ENCODE measurements at regions of chr3 and their contacts with region 1.

Region 1: DNA sequence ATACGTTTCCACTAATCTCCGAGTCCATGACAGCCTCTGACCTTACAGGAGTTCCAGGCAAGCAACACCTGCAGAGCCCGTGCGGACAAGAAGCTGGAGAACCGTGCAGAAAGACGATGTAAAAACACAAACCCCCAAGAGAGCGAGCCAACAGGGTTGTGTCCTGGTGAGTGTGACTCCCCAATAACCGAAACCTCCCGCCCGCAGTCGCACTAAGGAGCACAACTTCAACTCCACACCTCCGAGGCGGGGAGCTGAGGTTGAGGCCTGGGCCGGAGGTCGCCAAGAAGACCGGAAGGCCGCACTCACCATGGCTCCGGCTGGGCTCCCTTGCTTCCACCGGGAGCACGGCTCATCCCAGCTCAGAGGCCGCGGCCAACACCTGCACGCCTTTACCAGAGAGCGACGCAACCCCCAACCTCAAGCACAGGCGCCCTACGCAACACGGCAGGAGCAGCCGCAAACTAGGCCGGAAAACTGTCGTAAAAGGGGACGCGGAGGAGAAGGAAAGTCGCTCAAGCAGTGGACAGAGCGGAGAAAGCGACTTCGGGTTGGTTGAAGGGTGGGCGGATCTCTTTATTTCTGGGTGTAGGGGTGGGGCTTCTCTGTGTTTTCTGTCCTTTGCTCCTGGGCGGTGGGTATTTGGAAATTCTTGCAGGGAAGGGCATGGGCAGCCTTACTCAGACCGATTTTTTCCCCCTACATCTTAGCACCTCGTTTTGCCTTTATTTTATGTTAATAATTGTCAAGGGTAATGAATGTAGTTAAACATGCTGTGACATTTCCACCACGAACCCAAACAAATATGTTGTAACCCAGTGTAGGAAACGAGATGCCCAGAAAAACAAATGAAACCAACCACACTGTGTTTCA is at the start of gene DNAJC19:
- DNase-seq: peak; percentile 94
- ATAC-seq: peak; percentile 96
- H3K4me3 Mint-ChIP-seq: peak within 1 kb of the TSS; percentile 82
- H3K27ac Mint-ChIP-seq: peak within 1 kb of the TSS; percentile 96
- H3K4me1 Mint-ChIP-seq: peaks cover 26% of the 10 kb centered on the region
- H3K27me3 Mint-ChIP-seq: no peaks in the 10 kb centered on the region
- CTCF ChIP-seq: no peak
- total RNA-seq, gene DNAJC19: 67.6 to 69.3 TPM

Region 2: DNA sequence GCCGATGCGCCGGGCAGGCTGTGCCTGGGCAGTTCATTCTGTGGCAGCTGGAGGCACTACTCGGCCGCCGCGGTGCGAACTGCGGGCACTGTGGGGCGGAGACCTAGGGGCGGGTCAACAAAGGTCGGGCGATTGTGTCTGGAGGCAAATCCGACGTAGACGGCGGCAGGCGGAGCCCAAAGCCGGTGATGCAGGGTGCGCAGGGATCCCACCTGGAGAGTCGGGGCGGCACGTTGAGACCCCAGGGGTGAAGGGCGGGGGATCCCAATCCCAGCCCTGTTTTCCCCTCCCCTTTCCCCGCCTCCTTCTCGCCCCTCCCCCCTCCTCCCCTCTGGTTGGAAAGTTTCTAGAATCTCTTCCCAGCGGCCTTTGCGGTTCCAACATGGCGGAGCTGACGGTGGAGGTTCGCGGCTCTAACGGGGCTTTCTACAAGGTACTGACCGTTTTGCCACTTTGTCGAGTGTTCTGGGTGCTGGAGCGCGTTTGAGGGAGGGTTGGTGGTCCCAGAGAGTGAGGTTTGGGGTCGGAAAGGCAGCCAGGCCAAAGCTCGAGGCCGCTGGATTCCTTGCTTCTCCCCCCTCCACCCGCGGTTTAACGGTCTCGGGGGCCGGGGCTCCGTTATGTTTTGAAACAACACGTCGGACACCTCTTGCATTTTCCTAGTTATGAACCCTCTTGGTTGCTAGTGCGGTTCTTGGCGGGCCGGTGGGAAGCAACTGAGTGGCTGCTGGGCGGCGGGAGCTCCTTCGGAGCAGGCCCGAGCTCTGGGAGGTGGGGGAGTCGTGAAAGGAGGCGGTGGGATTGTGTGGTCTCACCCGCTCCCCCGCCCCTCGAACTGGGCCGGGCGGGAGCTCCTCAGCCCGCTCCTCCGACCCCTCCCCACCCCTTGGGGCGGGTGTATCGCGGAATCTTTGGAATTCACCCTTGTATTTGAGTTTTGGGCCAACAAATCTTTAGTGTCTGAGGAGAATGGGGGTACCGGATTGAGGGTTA is 76.9 kb before region 1 on chr3 and contains the start of gene FXR1:
- CTCF ChIA-PET with region 1: no interaction called
- POLR2A ChIA-PET with region 1: interaction called, 8 read pairs
- intact Hi-C with region 1: loop called (anchors 2 kb)
- DNase-seq: peak; percentile 97
- ATAC-seq: peak; percentile 98
- H3K4me3 Mint-ChIP-seq: peak within 1 kb of the TSS; percentile 92
- H3K27ac Mint-ChIP-seq: peak within 1 kb of the TSS; percentile 93
- H3K4me1 Mint-ChIP-seq: peaks cover 45% of the 10 kb centered on the region
- H3K27me3 Mint-ChIP-seq: no peaks in the 10 kb centered on the region
- CTCF ChIP-seq: no peak
- total RNA-seq, gene FXR1: 169 to 174 TPM

Measured in activated CD8-positive, alpha-beta T cell treated with anti-CD3 and anti-CD28 coated beads for 36 hours (primary cell).